ENCODE measurements at regions of chr6 and their contacts with region 1.

Region 1: DNA sequence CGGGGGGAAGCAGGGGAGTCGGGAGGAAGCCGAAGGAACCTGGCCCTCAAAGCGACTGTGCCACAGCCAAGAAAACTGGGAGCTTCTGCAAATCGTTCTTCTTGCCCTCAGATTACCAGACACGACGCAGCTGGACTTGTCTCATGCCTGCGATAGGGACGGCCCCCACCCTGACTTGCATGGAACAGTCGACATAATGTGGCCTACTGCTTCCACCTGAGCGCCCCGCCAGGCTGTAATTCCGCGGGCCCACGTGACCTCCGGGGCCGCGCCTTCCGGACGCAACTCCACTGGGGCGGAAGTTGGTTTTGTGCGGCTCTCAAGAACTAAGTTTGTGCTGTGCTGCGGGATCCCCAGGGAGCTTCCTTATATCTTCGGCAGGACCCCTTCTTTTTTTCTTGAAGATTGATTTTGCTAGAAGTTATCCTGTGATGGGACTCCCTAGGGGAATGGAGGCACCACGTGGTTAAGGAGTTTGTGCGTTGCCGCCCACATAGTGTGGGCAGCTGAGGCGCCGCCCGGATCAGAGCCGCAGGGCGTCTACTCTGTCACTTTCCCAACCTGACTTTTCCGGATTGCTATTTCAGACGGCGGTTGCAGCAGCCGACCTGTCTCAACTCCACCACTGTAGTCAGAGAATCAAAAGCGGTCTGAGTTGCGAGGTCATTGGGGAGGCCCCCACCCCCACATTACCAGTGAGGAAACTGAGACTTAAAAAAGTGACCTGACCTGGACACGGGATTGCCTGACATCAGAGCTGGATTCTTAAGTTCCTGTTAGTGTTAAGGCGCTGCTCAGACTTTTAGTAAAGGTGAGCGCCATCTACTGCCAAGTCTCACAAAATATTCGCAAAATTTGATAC is 540 bp upstream of the CD164 start:
- DNase-seq: peak; percentile 90 to 97 (median 96)
- ATAC-seq: peak; percentile 82
- H3K4me3 ChIP-seq: peak overlapping the region; percentile 89
- H3K4me3 Mint-ChIP-seq: peak overlapping the region; percentile 88 to 99 (median 98)
- H3K27ac ChIP-seq: peak overlapping the region; percentile 95
- H3K27ac Mint-ChIP-seq: peak overlapping the region; percentile 92 to 100 (median 99)
- H3K4me1 ChIP-seq: peaks cover 22 to 32% of the 10 kb centered on the region in 2 donors
- H3K4me1 Mint-ChIP-seq: peaks cover 34 to 58% (median 51%) of the 10 kb centered on the region in 7 donors
- H3K27me3 ChIP-seq: no peaks in the 10 kb centered on the region
- H3K27me3 Mint-ChIP-seq: peaks cover 0 to 7% (median 0%) of the 10 kb centered on the region in 5 donors

Region 2: DNA sequence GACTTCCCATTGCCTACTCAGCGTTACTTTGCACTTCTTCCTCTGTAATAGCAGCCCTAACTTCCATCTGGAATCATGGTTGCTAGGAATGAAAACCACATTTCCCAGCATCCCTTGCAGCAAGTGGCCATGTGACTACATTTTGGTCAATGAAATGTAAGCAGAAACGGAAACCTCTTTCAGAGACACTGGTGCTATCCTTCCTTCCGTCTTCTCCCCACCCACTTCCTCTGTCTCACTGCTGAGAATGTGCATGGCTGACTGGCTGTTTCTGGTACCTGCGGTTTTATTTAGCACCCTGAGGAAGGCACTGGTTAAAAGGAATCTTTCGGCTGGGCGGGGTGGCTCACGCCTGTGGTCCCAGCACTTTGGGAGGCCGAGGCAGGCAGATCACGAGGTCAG is 1666.1 kb before region 1 on chr6:
- CTCF ChIA-PET with region 1: no interaction called
- POLR2A ChIA-PET with region 1: no interaction called
- intact Hi-C with region 1: loop called in 1 of 2 experiments (anchors 5 kb)
- DNase-seq: peak; percentile 27 to 89 (median 85)
- ATAC-seq: peak; percentile 95
- H3K4me3 ChIP-seq: no peak overlapping the region
- H3K4me3 Mint-ChIP-seq: peak overlapping the region; percentile 43 to 81 (median 72)
- H3K27ac ChIP-seq: peak overlapping the region; percentile 49
- H3K27ac Mint-ChIP-seq: peak overlapping the region; percentile 82 to 97 (median 92)
- H3K4me1 ChIP-seq: peaks cover 47 to 57% of the 10 kb centered on the region in 2 donors
- H3K4me1 Mint-ChIP-seq: peaks cover 46 to 86% (median 74%) of the 10 kb centered on the region in 7 donors
- H3K27me3 ChIP-seq: no peaks in the 10 kb centered on the region
- H3K27me3 Mint-ChIP-seq: no peaks in the 10 kb centered on the region

Region 3: GRCh38 chr6:108541838-108542759 is 840.7 kb before region 1 on chr6:
- CTCF ChIA-PET with region 1: no interaction called
- POLR2A ChIA-PET with region 1: no interaction called
- intact Hi-C with region 1: loop called (anchors 1 to 5 kb)
- DNase-seq: peak in 8 of 9 donors; percentile 41 to 77 (median 70)
- ATAC-seq: peak; percentile 84
- H3K4me3 ChIP-seq: no peak overlapping the region
- H3K4me3 Mint-ChIP-seq: peak overlapping the region in 7 of 10 donors; percentile 2 to 67 (median 31)
- H3K27ac ChIP-seq: no peak overlapping the region
- H3K27ac Mint-ChIP-seq: peak overlapping the region in 1 of 9 donors; percentile 33
- H3K4me1 ChIP-seq: peaks cover 8 to 11% of the 10 kb centered on the region in 2 donors
- H3K4me1 Mint-ChIP-seq: peaks cover 7 to 18% (median 8%) of the 10 kb centered on the region in 7 donors
- H3K27me3 ChIP-seq: no peaks in the 10 kb centered on the region
- H3K27me3 Mint-ChIP-seq: peaks cover 0 to 52% (median 6%) of the 10 kb centered on the region in 5 donors

Region 4: GRCh38 chr6:108944707-108945680 is 437.8 kb before region 1 on chr6:
- CTCF ChIA-PET with region 1: interaction called, 3 read pairs
- POLR2A ChIA-PET with region 1: no interaction called
- intact Hi-C with region 1: loop called in 1 of 2 experiments (anchors 2 kb)
- DNase-seq: no peak
- ATAC-seq: no peak
- H3K4me3 ChIP-seq: no peak overlapping the region
- H3K4me3 Mint-ChIP-seq: peak overlapping the region in 1 of 10 donors; percentile 17
- H3K27ac ChIP-seq: no peak overlapping the region
- H3K27ac Mint-ChIP-seq: peak overlapping the region in 6 of 9 donors; percentile 5 to 75 (median 66)
- H3K4me1 ChIP-seq: peaks cover 28 to 38% of the 10 kb centered on the region in 2 donors
- H3K4me1 Mint-ChIP-seq: peaks cover 22 to 82% (median 73%) of the 10 kb centered on the region in 7 donors
- H3K27me3 ChIP-seq: no peaks in the 10 kb centered on the region
- H3K27me3 Mint-ChIP-seq: peaks cover 0 to 5% (median 0%) of the 10 kb centered on the region in 5 donors

Region 5: DNA sequence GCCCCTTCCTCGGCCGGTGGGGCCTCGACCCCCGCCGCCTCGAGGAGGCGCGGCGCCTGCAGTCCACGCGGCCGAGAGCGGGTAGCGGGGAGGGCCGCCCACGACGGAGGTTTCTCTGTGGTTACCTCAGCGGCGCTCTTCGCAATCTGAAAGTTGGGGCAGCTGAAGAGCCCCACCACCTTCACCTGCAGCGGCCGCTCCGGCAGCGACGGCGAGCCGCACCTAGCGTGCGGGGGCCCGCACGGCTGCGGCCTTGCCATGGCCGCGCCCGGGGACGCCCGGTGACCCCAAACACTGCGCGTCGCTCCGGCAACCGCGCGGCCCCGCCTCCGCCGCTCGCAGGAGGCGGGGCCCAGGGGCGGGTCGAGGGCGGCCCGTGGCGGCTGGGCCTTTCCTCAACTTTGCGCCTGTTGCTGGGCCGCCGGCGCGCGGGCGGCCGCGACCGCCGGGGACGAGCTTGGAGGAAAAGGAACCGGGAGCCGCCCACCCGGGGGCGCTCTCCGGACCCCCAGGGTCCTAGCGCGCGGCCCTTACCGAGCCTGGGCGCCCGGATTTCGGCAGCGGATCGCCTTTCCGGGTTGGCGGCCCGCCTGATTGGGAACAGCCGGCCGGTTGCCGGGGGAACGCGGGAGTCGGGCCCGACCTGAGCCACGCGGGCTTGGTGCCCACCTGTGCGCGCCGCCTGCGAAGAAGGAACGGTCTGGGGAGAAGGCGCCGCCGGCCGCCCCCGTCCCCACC is 57.7 kb after region 1 on chr6 and contains the starts of genes PPIL6 and SMPD2:
- CTCF ChIA-PET with region 1: interaction called, 18 read pairs
- POLR2A ChIA-PET with region 1: interaction called, 47 read pairs
- intact Hi-C with region 1: loop called (anchors 1 kb)
- DNase-seq: peak; percentile 63 to 85 (median 77)
- ATAC-seq: peak; percentile 91
- H3K4me3 ChIP-seq: peak within 1 kb of the TSS; percentile 65
- H3K4me3 Mint-ChIP-seq: peak within 1 kb of the TSS; percentile 90 to 95 (median 94)
- H3K27ac ChIP-seq: peak within 1 kb of the TSS; percentile 98
- H3K27ac Mint-ChIP-seq: peak within 1 kb of the TSS; percentile 87 to 97 (median 93)
- H3K4me1 ChIP-seq: peaks cover 11% of the 10 kb centered on the region in 2 donors
- H3K4me1 Mint-ChIP-seq: peaks cover 10 to 32% (median 21%) of the 10 kb centered on the region in 7 donors
- H3K27me3 ChIP-seq: no peaks in the 10 kb centered on the region
- H3K27me3 Mint-ChIP-seq: peaks cover 0 to 2% (median 0%) of the 10 kb centered on the region in 5 donors
- total RNA-seq, gene PPIL6: 0.13 to 1.9 (median 0.40) TPM in 4 of 5 experiments, not detected in the other
- total RNA-seq, gene SMPD2: 16.9 to 33.7 (median 19.6) TPM

Region 6: GRCh38 chr6:110039364-110039980 is 656.7 kb after region 1 on chr6:
- CTCF ChIA-PET with region 1: interaction called, 9 read pairs
- POLR2A ChIA-PET with region 1: interaction called, 6 read pairs
- intact Hi-C with region 1: loop called in 1 of 2 experiments (anchors 1 kb)
- DNase-seq: peak; percentile 66 to 81 (median 78)
- ATAC-seq: peak; percentile 92
- H3K4me3 ChIP-seq: peak overlapping the region; percentile 54
- H3K4me3 Mint-ChIP-seq: peak overlapping the region; percentile 89 to 97 (median 90)
- H3K27ac ChIP-seq: peak overlapping the region; percentile 53
- H3K27ac Mint-ChIP-seq: peak overlapping the region; percentile 80 to 98 (median 92)
- H3K4me1 ChIP-seq: peaks cover 0 to 14% of the 10 kb centered on the region in 2 donors
- H3K4me1 Mint-ChIP-seq: peaks cover 9 to 17% (median 13%) of the 10 kb centered on the region in 7 donors
- H3K27me3 ChIP-seq: no peaks in the 10 kb centered on the region
- H3K27me3 Mint-ChIP-seq: no peaks in the 10 kb centered on the region

Region 7: GRCh38 chr6:110958329-110959192 is 1575.8 kb after region 1 on chr6 and contains the start of gene GTF3C6:
- CTCF ChIA-PET with region 1: no interaction called
- POLR2A ChIA-PET with region 1: no interaction called
- intact Hi-C with region 1: loop called in 1 of 2 experiments (anchors 2 kb)
- DNase-seq: peak; percentile 85 to 94 (median 91)
- ATAC-seq: peak; percentile 99
- H3K4me3 ChIP-seq: peak within 1 kb of the TSS; percentile 86
- H3K4me3 Mint-ChIP-seq: peak within 1 kb of the TSS; percentile 95 to 99 (median 96)
- H3K27ac ChIP-seq: peak within 1 kb of the TSS; percentile 81
- H3K27ac Mint-ChIP-seq: peak within 1 kb of the TSS; percentile 96 to 99 (median 97)
- H3K4me1 ChIP-seq: peaks cover 4% of the 10 kb centered on the region in 2 donors
- H3K4me1 Mint-ChIP-seq: peaks cover 13 to 27% (median 20%) of the 10 kb centered on the region in 7 donors
- H3K27me3 ChIP-seq: no peaks in the 10 kb centered on the region
- H3K27me3 Mint-ChIP-seq: peaks cover 0 to 7% (median 0%) of the 10 kb centered on the region in 5 donors
- total RNA-seq, gene GTF3C6: 18.1 to 100 (median 29.9) TPM

Measured in naive thymus-derived CD4-positive, alpha-beta T cell (primary cell).